ENCODE measurements at regions of chr2 and their contacts with region 1.

Region 1: DNA sequence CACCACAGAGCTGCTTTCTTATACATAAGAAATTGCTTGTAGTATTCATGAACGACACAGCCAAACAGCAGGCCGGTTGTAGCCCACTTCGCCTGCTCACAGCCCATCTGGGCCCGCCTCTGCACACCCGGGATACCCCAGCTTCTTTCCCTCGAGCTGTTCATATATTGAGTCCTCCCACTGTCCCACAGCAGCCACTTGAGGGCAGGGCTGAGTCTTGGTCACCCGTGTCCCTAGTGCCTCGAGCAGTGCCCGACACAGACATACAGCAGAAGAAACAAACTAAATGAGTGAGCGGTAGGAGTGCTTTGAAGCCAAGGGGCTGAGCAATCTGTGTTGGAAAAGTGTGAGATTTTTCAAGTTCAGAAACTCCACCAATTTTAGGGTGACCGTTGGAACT is 251.4 kb downstream of the KLHL29 start:
- DNase-seq: peak; percentile 24
- H3K4me3 ChIP-seq: no peak overlapping the region
- H3K27ac ChIP-seq: no peak overlapping the region
- H3K4me1 ChIP-seq: peaks cover 8% of the 10 kb centered on the region
- H3K27me3 ChIP-seq: no peaks in the 10 kb centered on the region
- CTCF ChIP-seq: peak in 1 of 2 donors; percentile 20
- POLR2A ChIP-seq: no peak

Region 2: GRCh38 chr2:23624378-23624777 is 12.0 kb before region 1 on chr2:
- CTCF ChIA-PET with region 1: interaction called, 15 read pairs
- POLR2A ChIA-PET with region 1: no interaction called
- dilution Hi-C with region 1: no loop called
- intact Hi-C with region 1: no loop called
- DNase-seq: no peak
- H3K4me3 ChIP-seq: no peak overlapping the region
- H3K27ac ChIP-seq: no peak overlapping the region
- H3K4me1 ChIP-seq: no peaks in the 10 kb centered on the region
- H3K27me3 ChIP-seq: no peaks in the 10 kb centered on the region
- CTCF ChIP-seq: peak; percentile 40 to 60
- POLR2A ChIP-seq: no peak

Region 3: DNA sequence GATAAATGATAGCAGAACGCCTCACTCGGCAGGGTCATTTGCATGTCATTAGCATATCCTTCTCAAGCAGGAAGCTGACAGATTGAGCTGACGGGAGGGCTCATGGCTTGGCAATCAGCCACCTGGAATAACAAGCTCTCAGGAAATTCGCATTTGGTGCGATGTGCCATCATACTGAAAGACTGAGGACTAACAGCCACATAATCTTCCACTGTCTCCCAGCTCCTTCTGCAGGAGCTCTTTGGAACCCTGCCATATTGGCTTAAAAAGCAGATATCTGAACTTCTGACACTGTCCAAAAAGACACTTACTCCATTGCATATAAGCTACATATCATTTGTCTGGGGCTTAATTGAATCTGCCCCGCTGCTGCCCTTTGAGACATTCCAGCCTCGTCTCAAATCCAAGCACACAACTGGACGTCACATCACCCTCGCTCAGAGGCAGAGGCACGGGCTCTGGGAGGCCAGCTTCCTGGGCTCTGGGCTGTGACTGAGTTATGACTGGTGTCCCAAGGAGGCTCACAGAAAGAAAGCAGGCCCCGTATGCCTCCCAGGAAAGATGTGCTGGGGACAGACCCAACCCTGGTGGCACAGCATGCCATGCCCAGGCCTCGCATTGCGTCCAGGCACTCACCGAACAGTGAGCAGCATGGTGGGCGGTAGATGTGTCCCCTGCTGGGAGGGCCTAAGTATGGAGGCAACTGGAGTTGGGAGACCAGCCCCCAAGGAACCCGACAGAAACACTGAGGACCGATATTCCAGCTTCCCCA is 62.5 kb after region 1 on chr2:
- CTCF ChIA-PET with region 1: no interaction called
- POLR2A ChIA-PET with region 1: no interaction called
- dilution Hi-C with region 1: no loop called
- intact Hi-C with region 1: no loop called
- DNase-seq: peak; percentile 30
- H3K4me3 ChIP-seq: no peak overlapping the region
- H3K27ac ChIP-seq: no peak overlapping the region
- H3K4me1 ChIP-seq: no peaks in the 10 kb centered on the region
- H3K27me3 ChIP-seq: no peaks in the 10 kb centered on the region
- CTCF ChIP-seq: no peak
- POLR2A ChIP-seq: no peak

Region 4: DNA sequence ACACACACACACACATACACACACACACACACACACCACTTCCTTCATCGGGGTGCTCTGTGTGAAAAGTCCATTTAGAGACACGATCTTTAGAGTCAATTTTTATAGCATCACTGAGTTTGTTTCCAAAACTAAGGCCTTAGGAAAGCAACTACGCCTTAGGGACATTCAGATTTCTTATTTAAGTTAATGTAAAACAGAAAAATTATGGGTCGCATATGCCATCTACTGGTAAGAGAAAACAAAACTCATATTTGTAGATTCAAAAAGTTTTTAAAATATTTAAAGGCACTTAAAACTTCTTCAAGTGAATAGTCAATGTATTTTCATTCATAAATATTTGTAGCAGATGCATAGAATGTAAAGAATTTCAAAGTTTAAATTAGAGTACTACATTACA is 124.3 kb after region 1 on chr2:
- CTCF ChIA-PET with region 1: interaction called, 5 read pairs
- POLR2A ChIA-PET with region 1: no interaction called
- dilution Hi-C with region 1: no loop called
- intact Hi-C with region 1: loop called (anchors 5 kb)
- DNase-seq: peak; percentile 44
- H3K4me3 ChIP-seq: no peak overlapping the region
- H3K27ac ChIP-seq: no peak overlapping the region
- H3K4me1 ChIP-seq: peaks cover 17% of the 10 kb centered on the region
- H3K27me3 ChIP-seq: no peaks in the 10 kb centered on the region
- CTCF ChIP-seq: no peak
- POLR2A ChIP-seq: no peak